ENCODE measurements at regions of chr6 and their contacts with region 1.

Region 1: GRCh38 chr6:42547407-42548329 is 16.2 kb upstream of the UBR2 start:
- DNase-seq: peak; percentile 73 to 85 (median 82)
- H3K4me3 ChIP-seq: peak overlapping the region in 1 of 2 donors; percentile 18
- H3K4me3 Mint-ChIP-seq: peak overlapping the region; percentile 59 to 76 (median 74)
- H3K27ac ChIP-seq: no peak overlapping the region
- H3K27ac Mint-ChIP-seq: peak overlapping the region in 6 of 7 donors; percentile 41 to 93 (median 56)
- H3K4me1 ChIP-seq: peaks cover 9% of the 10 kb centered on the region
- H3K4me1 Mint-ChIP-seq: peaks cover 5 to 13% (median 9%) of the 10 kb centered on the region in 4 donors
- H3K27me3 ChIP-seq: no peaks in the 10 kb centered on the region
- H3K27me3 Mint-ChIP-seq: peaks cover 2 to 4% of the 10 kb centered on the region in 2 donors

Region 2: GRCh38 chr6:42224222-42224989 is 323.3 kb before region 1 on chr6:
- CTCF ChIA-PET with region 1: interaction called, 13 read pairs
- POLR2A ChIA-PET with region 1: no interaction called
- intact Hi-C with region 1: no loop called
- DNase-seq: no peak
- H3K4me3 ChIP-seq: no peak overlapping the region
- H3K4me3 Mint-ChIP-seq: no peak overlapping the region
- H3K27ac ChIP-seq: no peak overlapping the region
- H3K27ac Mint-ChIP-seq: peak overlapping the region in 1 of 7 donors; percentile 59
- H3K4me1 ChIP-seq: no peaks in the 10 kb centered on the region
- H3K4me1 Mint-ChIP-seq: peaks cover 0 to 5% (median under 1%) of the 10 kb centered on the region in 4 donors
- H3K27me3 ChIP-seq: no peaks in the 10 kb centered on the region
- H3K27me3 Mint-ChIP-seq: no peaks in the 10 kb centered on the region

Region 3: GRCh38 chr6:42294759-42295158 is 252.9 kb before region 1 on chr6:
- CTCF ChIA-PET with region 1: interaction called, 22 read pairs
- POLR2A ChIA-PET with region 1: no interaction called
- intact Hi-C with region 1: no loop called
- DNase-seq: no peak
- H3K4me3 ChIP-seq: no peak overlapping the region
- H3K4me3 Mint-ChIP-seq: peak overlapping the region in 6 of 8 donors; percentile 24 to 78 (median 54)
- H3K27ac ChIP-seq: no peak overlapping the region
- H3K27ac Mint-ChIP-seq: peak overlapping the region; percentile 8 to 90 (median 68)
- H3K4me1 ChIP-seq: peaks cover 60% of the 10 kb centered on the region
- H3K4me1 Mint-ChIP-seq: peaks cover 51 to 74% (median 61%) of the 10 kb centered on the region in 4 donors
- H3K27me3 ChIP-seq: no peaks in the 10 kb centered on the region
- H3K27me3 Mint-ChIP-seq: no peaks in the 10 kb centered on the region

Region 4: GRCh38 chr6:42367353-42368011 is 180.2 kb before region 1 on chr6:
- CTCF ChIA-PET with region 1: interaction called, 12 read pairs
- POLR2A ChIA-PET with region 1: no interaction called
- intact Hi-C with region 1: no loop called
- DNase-seq: peak in 1 of 5 donors; percentile 29
- H3K4me3 ChIP-seq: peak overlapping the region; percentile 19 to 48
- H3K4me3 Mint-ChIP-seq: peak overlapping the region; percentile 76 to 89 (median 82)
- H3K27ac ChIP-seq: peak overlapping the region; percentile 48
- H3K27ac Mint-ChIP-seq: peak overlapping the region; percentile 90 to 95 (median 94)
- H3K4me1 ChIP-seq: peaks cover 72% of the 10 kb centered on the region
- H3K4me1 Mint-ChIP-seq: peaks cover 55 to 86% (median 70%) of the 10 kb centered on the region in 4 donors
- H3K27me3 ChIP-seq: no peaks in the 10 kb centered on the region
- H3K27me3 Mint-ChIP-seq: no peaks in the 10 kb centered on the region

Region 5: DNA sequence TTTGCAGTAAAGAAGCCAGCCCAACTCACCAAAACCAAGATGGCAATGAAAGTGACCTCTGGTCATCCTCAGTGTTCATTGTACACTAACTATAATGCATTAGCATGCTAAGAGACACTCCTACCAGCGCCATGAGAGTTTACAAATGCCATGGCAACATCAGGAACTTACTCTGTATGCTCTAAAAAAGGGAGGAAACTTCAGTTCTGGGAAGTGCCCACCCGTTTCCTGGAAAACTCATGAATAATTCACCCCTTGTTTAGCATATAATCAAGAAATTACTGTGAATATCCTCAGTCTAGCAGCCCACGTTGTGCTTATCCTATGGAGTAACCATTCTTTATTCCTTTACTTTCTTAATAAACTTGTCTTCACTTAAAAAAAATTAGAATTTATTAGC is 76.5 kb before region 1 on chr6:
- CTCF ChIA-PET with region 1: interaction called, 11 read pairs
- POLR2A ChIA-PET with region 1: no interaction called
- intact Hi-C with region 1: no loop called
- DNase-seq: no peak
- H3K4me3 ChIP-seq: no peak overlapping the region
- H3K4me3 Mint-ChIP-seq: no peak overlapping the region
- H3K27ac ChIP-seq: no peak overlapping the region
- H3K27ac Mint-ChIP-seq: no peak overlapping the region
- H3K4me1 ChIP-seq: no peaks in the 10 kb centered on the region
- H3K4me1 Mint-ChIP-seq: no peaks in the 10 kb centered on the region
- H3K27me3 ChIP-seq: no peaks in the 10 kb centered on the region
- H3K27me3 Mint-ChIP-seq: no peaks in the 10 kb centered on the region

Region 6: DNA sequence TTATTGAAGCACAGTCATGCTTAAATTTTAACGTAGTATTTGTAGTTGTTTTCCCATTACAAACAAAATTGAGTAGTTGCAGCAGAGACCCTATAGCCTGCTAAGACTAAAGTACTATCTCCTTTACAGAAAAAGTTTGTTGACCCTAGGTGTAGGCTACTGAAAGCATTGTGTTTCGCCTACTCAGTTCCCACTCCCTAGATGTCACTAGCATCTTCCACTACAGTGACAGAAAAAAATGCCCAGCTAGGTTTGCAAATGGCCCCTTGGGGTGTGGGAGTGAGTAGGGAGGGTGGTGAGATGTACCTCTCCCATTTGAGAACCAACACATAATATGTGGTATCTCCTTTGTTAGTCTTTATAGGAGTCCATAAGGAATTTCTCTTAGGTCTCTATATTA is 50.6 kb after region 1 on chr6:
- CTCF ChIA-PET with region 1: interaction called, 5 read pairs
- POLR2A ChIA-PET with region 1: no interaction called
- intact Hi-C with region 1: loop called (anchors 1 kb)
- DNase-seq: no peak
- H3K4me3 ChIP-seq: no peak overlapping the region
- H3K4me3 Mint-ChIP-seq: no peak overlapping the region
- H3K27ac ChIP-seq: no peak overlapping the region
- H3K27ac Mint-ChIP-seq: peak overlapping the region in 2 of 7 donors; percentile 48 to 60
- H3K4me1 ChIP-seq: no peaks in the 10 kb centered on the region
- H3K4me1 Mint-ChIP-seq: peaks cover 9 to 18% (median 14%) of the 10 kb centered on the region in 4 donors
- H3K27me3 ChIP-seq: no peaks in the 10 kb centered on the region
- H3K27me3 Mint-ChIP-seq: no peaks in the 10 kb centered on the region

Region 7: GRCh38 chr6:42790549-42791181 is 243.0 kb after region 1 on chr6:
- CTCF ChIA-PET with region 1: no interaction called
- POLR2A ChIA-PET with region 1: no interaction called
- intact Hi-C with region 1: no loop called
- DNase-seq: no peak
- H3K4me3 ChIP-seq: no peak overlapping the region
- H3K4me3 Mint-ChIP-seq: peak overlapping the region in 5 of 8 donors; percentile 3 to 42 (median 19)
- H3K27ac ChIP-seq: no peak overlapping the region
- H3K27ac Mint-ChIP-seq: peak overlapping the region in 6 of 7 donors; percentile 14 to 91 (median 84)
- H3K4me1 ChIP-seq: peaks cover 64% of the 10 kb centered on the region
- H3K4me1 Mint-ChIP-seq: peaks cover under 1 to 29% (median 26%) of the 10 kb centered on the region in 4 donors
- H3K27me3 ChIP-seq: no peaks in the 10 kb centered on the region
- H3K27me3 Mint-ChIP-seq: no peaks in the 10 kb centered on the region

Measured in CD4-positive, alpha-beta memory T cell (primary cell).